HCT116 (cell line): ENCODE measurements at regions of chr11 and their contacts with region 1.

Region 1: GRCh38 chr11:12281571-12282478 is 95.5 kb upstream of the PARVA start:
- DNase-seq: peak; percentile 58
- ATAC-seq: peak; percentile 83
- H3K4me3 ChIP-seq: no peak overlapping the region
- H3K27ac ChIP-seq: no peak overlapping the region
- H3K4me1 ChIP-seq: peaks cover 10 to 29% of the 10 kb centered on the region in 2 experiments
- H3K27me3 ChIP-seq: no peaks in the 10 kb centered on the region
- CTCF ChIP-seq: peak; percentile 91 to 96 (median 95)
- POLR2A ChIP-seq: no peak
- RAD21 ChIP-seq: peak; percentile 100

Region 2: GRCh38 chr11:11798586-11799438 is 483.0 kb before region 1 on chr11:
- CTCF ChIA-PET with region 1: no interaction called
- POLR2A ChIA-PET with region 1: no interaction called
- RAD21 ChIA-PET with region 1: no interaction called
- intact Hi-C with region 1: loop called (anchors 5 kb)
- DNase-seq: peak; percentile 60
- ATAC-seq: peak; percentile 97
- H3K4me3 ChIP-seq: no peak overlapping the region
- H3K27ac ChIP-seq: no peak overlapping the region
- H3K4me1 ChIP-seq: peaks cover 0 to 3% of the 10 kb centered on the region in 2 experiments; a peak in 1 of 4 replicates
- H3K27me3 ChIP-seq: no peaks in the 10 kb centered on the region
- CTCF ChIP-seq: peak; percentile 89 to 97 (median 95)
- POLR2A ChIP-seq: no peak
- RAD21 ChIP-seq: peak; percentile 92

Region 3: DNA sequence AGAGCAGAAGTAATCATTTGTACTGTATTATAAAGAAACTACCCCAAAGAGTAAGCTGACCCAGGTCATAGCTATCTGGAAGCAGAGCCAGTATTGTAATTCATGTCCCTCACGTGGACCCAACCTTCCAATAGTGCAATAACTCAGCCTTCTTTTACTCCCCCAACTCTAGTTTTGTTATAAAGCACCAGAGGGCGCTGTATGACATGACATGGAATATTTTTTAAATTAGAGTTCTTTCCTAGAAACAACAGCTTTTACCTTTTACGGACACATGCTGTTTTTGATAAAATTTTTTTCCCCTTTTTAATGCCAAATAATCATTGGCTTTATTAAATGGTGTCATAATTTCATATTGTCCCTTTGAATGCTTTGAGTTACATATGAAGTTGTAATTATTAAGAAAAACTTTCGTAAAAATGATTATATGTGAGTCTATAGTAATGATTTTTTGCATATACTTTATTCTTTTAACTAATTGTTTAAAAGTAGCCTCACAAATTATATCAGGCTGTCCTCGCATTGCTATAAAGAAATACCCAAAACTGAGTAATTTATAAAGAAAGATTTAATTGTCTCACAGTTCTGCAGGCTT is 350.3 kb before region 1 on chr11:
- CTCF ChIA-PET with region 1: interaction called, 3 read pairs
- POLR2A ChIA-PET with region 1: no interaction called
- RAD21 ChIA-PET with region 1: no interaction called
- intact Hi-C with region 1: loop called (anchors 2 kb)
- DNase-seq: peak; percentile 38
- ATAC-seq: peak; percentile 87
- H3K4me3 ChIP-seq: no peak overlapping the region
- H3K27ac ChIP-seq: no peak overlapping the region
- H3K4me1 ChIP-seq: no peaks in the 10 kb centered on the region
- H3K27me3 ChIP-seq: no peaks in the 10 kb centered on the region
- CTCF ChIP-seq: peak; percentile 47 to 72 (median 67); a peak in 5 of 6 replicates
- POLR2A ChIP-seq: no peak
- RAD21 ChIP-seq: peak; percentile 80

Region 4: GRCh38 chr11:12052676-12053605 is 228.9 kb before region 1 on chr11:
- CTCF ChIA-PET with region 1: interaction called, 104 read pairs
- POLR2A ChIA-PET with region 1: interaction called, 8 read pairs
- RAD21 ChIA-PET with region 1: interaction called, 8 to 16 read pairs
- intact Hi-C with region 1: no loop called
- DNase-seq: no peak
- ATAC-seq: peak; percentile 78
- H3K4me3 ChIP-seq: no peak overlapping the region
- H3K27ac ChIP-seq: no peak overlapping the region
- H3K4me1 ChIP-seq: no peaks in the 10 kb centered on the region
- H3K27me3 ChIP-seq: no peaks in the 10 kb centered on the region
- CTCF ChIP-seq: peak; percentile 33 to 47 (median 44); a peak in 4 of 6 replicates
- POLR2A ChIP-seq: no peak
- RAD21 ChIP-seq: peak; percentile 67

Region 5: DNA sequence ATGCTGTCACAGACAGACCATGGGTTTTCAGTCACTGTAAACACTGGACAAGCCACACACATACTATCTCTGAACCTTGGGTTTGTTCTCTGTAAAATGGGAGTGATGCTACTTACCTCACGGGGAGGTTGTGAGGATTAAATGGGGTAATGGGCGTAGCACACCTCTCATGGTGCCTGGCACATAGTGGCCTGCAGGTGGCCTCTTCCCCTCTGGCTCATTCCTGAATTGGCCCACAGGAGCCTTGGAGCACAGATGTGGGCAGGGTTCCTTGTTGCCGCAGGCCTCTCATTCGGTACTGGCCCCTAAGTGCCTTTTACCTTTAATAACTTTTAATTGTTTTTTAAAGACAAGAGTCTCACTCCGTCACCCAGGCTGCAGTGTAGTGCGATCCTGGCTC is 159.7 kb before region 1 on chr11:
- CTCF ChIA-PET with region 1: interaction called, 10 read pairs
- POLR2A ChIA-PET with region 1: no interaction called
- RAD21 ChIA-PET with region 1: interaction called, 3 read pairs
- intact Hi-C with region 1: no loop called
- DNase-seq: peak; percentile 48
- ATAC-seq: peak; percentile 86
- H3K4me3 ChIP-seq: no peak overlapping the region
- H3K27ac ChIP-seq: no peak overlapping the region
- H3K4me1 ChIP-seq: peaks cover 32 to 57% of the 10 kb centered on the region in 2 experiments
- H3K27me3 ChIP-seq: no peaks in the 10 kb centered on the region
- CTCF ChIP-seq: peak; percentile 55 to 82 (median 72); a peak in 5 of 6 replicates
- POLR2A ChIP-seq: no peak
- RAD21 ChIP-seq: peak; percentile 77

Region 6: GRCh38 chr11:12164061-12165014 is 117.5 kb before region 1 on chr11:
- CTCF ChIA-PET with region 1: no interaction called
- POLR2A ChIA-PET with region 1: no interaction called
- RAD21 ChIA-PET with region 1: no interaction called
- intact Hi-C with region 1: no loop called
- DNase-seq: peak; percentile 93
- ATAC-seq: peak; percentile 69
- H3K4me3 ChIP-seq: peak overlapping the region in 1 of 2 experiments; percentile 28; a peak in 2 of 4 replicates
- H3K27ac ChIP-seq: peak overlapping the region; percentile 87
- H3K4me1 ChIP-seq: peaks cover 64 to 88% of the 10 kb centered on the region in 2 experiments
- H3K27me3 ChIP-seq: no peaks in the 10 kb centered on the region
- CTCF ChIP-seq: no peak
- POLR2A ChIP-seq: no peak
- RAD21 ChIP-seq: 0 out of 2 replicates have a peak, but pooled peaks have one; percentile 25

Region 7: DNA sequence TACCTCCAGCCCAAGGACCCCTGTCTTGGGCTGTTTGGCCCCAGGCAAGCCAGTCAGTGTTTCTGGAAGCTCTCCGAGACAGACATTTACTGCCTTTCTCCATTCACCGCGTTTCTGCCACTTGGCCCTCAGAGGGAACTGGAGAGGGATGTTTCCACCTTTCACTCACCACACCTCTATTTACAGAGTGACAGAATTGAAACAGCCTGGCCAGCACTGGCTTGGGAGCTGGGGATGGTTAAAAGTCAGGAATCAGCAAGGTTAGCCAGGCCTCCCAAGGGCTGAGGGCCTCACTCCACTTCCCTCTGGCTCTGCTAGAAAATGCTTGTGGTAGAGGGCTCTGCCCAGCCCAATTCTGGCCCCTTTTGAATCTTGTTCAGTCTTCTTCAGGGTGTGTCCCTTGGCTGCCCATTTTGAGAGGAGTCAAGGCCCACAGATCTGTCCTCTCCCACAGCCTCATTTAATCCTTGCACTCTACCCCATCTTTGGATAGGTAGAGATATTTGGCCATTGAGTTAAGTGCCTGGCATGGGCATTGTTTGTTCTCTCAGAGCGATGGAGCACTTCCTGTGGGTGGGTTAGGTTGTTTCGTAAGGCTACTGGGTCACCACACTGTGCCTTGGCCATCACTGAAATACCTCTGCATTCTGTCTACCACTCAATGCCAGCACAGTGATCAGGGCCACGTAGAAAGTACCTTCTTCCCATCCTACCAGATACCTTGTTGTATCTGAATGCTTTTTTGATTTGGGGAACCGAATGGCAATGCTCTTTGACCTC is 52.2 kb before region 1 on chr11:
- CTCF ChIA-PET with region 1: no interaction called
- POLR2A ChIA-PET with region 1: no interaction called
- RAD21 ChIA-PET with region 1: no interaction called
- intact Hi-C with region 1: no loop called
- DNase-seq: no peak
- ATAC-seq: no peak
- H3K4me3 ChIP-seq: no peak overlapping the region
- H3K27ac ChIP-seq: no peak overlapping the region
- H3K4me1 ChIP-seq: peaks cover 4 to 14% of the 10 kb centered on the region in 2 experiments; a peak in 3 of 4 replicates
- H3K27me3 ChIP-seq: no peaks in the 10 kb centered on the region
- CTCF ChIP-seq: no peak
- POLR2A ChIP-seq: no peak
- RAD21 ChIP-seq: no peak